ENCODE measurements at regions of chr22 and their contacts with region 1.

Region 1: DNA sequence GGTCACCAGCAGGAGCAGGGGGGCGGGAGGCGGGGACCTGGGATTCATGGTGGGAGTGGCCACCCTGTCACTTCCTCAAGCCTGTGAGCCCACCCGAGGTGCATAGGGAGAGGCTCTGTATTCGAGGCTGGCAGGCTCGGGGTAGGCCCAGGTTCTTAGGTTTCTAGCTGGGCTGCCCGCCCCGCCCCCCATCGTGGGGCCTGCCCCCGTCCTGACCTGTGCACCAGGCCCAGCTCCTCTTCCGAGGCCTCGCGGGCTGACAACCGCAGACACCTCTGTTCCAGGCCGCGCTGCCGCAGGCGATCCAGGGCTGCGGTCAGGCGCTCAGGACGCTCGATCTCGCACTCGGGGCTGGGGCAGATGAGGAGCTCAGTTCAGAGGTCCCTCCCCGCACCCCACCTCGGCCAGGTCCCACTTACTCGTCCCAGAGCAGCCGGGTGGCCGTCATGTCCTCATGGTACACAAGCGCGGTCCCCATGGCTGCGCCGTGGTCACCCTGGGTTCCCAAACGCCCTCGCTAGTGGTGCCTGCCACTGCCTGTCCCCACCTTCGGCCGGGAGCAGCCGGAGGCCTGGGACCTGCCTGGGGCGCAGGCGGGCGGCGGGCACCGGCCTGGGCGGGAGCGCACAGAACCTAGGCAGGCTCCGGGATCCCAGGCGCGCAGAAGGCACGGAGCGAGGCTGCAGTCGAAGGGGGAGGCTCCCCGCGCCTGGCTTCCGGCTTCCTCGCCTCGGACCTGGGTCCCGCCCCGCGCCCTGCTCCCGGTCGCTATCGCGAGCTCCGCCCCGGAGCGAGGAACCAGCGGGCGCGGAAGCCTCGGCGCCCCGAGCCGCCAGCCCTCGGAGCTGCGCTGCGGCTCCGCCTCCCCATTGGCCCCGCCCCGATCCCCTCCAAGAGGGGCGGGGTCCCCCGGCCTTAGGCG is at the start of gene HDAC10:
- DNase-seq: peak; percentile 85
- ATAC-seq: peak; percentile 84
- H3K4me3 ChIP-seq: peak within 1 kb of the TSS; percentile 56 to 81 (median 79)
- H3K4me3 Mint-ChIP-seq: peak within 1 kb of the TSS; percentile 86
- H3K27ac ChIP-seq: peak within 1 kb of the TSS; percentile 41 to 49
- H3K27ac Mint-ChIP-seq: peak within 1 kb of the TSS; percentile 76
- H3K4me1 ChIP-seq: peaks cover 15 to 44% of the 10 kb centered on the region in 2 donors
- H3K4me1 Mint-ChIP-seq: peaks cover 24% of the 10 kb centered on the region
- H3K27me3 ChIP-seq: no peaks in the 10 kb centered on the region
- H3K27me3 Mint-ChIP-seq: no peaks in the 10 kb centered on the region
- CTCF ChIP-seq: no peak
- total RNA-seq, gene HDAC10: 120 and 136 TPM in 2 replicates

Region 2: DNA sequence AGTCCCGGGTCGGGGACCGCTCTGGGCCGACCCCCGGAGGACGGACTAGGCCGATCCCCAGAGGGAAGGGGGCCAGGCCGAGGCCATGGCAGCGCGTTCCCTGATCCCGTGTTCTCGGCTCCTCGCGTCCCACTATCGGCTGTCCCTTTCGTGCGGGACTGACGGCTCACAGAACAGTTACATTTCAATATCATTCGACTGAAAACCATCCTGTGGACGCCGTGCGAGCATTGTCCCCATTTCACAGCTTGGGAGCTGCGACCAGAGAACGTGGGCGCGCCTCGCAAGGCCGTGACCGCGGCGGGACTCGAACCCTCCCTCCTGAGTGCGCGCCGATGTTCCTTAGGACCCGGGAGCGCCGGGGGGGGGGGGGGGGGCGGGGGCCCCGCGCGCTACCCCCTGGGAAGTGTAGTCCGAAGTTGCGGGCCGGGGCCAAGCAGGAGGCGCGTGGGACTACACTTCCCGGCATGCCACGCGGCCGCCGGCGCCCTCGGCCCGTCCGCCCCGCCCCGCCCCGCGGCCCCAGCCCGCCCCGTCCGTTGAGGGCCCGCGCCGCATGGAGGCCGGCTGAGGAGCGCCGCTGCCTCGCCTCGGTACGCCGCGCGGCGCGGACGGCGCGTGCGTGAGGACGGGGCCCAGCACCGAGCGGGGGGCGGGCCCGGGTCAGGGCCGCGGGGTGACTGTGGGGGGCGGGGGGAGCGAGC is 65.3 kb before region 1 on chr22 and contains the start of gene TRABD:
- CTCF ChIA-PET with region 1: no interaction called
- POLR2A ChIA-PET with region 1: no interaction called
- intact Hi-C with region 1: no loop called
- DNase-seq: peak; percentile 92
- ATAC-seq: peak; percentile 60
- H3K4me3 ChIP-seq: peak within 1 kb of the TSS; percentile 52 to 76 (median 61)
- H3K4me3 Mint-ChIP-seq: peak within 1 kb of the TSS; percentile 90
- H3K27ac ChIP-seq: peak within 1 kb of the TSS; percentile 38 to 71
- H3K27ac Mint-ChIP-seq: peak within 1 kb of the TSS; percentile 86
- H3K4me1 ChIP-seq: peaks cover 50 to 54% of the 10 kb centered on the region in 2 donors
- H3K4me1 Mint-ChIP-seq: peaks cover 36% of the 10 kb centered on the region
- H3K27me3 ChIP-seq: peaks cover 0 to 17% (median 2%) of the 10 kb centered on the region in 4 experiments
- H3K27me3 Mint-ChIP-seq: no peaks in the 10 kb centered on the region
- CTCF ChIP-seq: no peak
- total RNA-seq, gene TRABD: 200 and 205 TPM in 2 replicates

Region 3: DNA sequence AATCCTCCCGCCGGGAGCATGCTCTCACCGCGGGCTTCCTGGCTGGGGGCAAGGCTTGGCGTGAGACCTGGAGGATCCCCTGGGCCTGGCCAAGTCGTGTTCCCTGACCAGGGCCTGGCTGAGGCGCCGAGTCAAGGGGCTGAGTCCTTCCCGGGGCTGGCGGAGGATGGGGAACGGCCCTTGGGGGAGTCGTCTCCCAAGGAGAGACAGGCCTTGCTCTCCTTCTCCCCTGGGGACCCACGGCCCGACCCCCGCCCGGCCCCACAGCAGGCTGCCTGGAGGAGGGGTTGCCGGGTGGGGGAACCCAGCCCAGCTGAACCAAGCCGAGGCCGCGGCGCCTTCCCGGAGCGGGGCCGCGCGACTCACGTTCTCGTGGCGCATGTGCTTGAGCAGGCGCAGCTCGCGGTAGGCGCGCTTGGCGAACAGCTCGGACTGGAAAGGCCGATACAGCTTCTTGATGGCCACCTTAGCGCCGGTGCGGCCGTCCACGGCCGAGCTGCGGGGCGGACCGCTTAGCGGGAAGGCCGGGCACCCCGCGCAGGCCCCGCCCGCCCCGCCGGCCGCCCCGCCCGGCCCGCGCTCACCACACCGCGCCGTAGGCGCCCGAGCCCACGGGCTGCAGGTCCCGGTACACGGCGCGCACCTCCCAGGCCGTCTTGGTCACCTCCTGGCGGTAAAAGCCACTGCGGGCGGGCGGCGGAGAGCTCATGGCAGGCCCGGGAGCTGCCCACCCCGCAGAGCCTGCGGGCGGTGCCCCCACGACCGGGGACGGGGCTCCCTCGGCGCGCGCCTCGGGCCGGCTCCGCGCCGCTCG is 10.2 kb after region 1 on chr22:
- CTCF ChIA-PET with region 1: interaction called, 22 read pairs
- POLR2A ChIA-PET with region 1: no interaction called
- intact Hi-C with region 1: no loop called
- DNase-seq: no peak
- ATAC-seq: peak; percentile 28
- H3K4me3 ChIP-seq: peak overlapping the region in 3 of 5 experiments; percentile 5 to 36 (median 33)
- H3K4me3 Mint-ChIP-seq: peak overlapping the region; percentile 45
- H3K27ac ChIP-seq: no peak overlapping the region
- H3K27ac Mint-ChIP-seq: no peak overlapping the region
- H3K4me1 ChIP-seq: peaks cover 17 to 21% of the 10 kb centered on the region in 2 donors
- H3K4me1 Mint-ChIP-seq: peaks cover 13% of the 10 kb centered on the region
- H3K27me3 ChIP-seq: peaks cover 0 to 31% (median 8%) of the 10 kb centered on the region in 4 experiments
- H3K27me3 Mint-ChIP-seq: peaks cover 10% of the 10 kb centered on the region
- CTCF ChIP-seq: no peak

Region 4: GRCh38 chr22:50361688-50362087 is 110.9 kb after region 1 on chr22:
- CTCF ChIA-PET with region 1: interaction called, 11 read pairs
- POLR2A ChIA-PET with region 1: no interaction called
- intact Hi-C with region 1: no loop called
- DNase-seq: no peak
- ATAC-seq: no peak
- H3K4me3 ChIP-seq: no peak overlapping the region
- H3K4me3 Mint-ChIP-seq: no peak overlapping the region
- H3K27ac ChIP-seq: no peak overlapping the region
- H3K27ac Mint-ChIP-seq: no peak overlapping the region
- H3K4me1 ChIP-seq: peaks cover 0 to 2% of the 10 kb centered on the region in 2 donors
- H3K4me1 Mint-ChIP-seq: peaks cover 32% of the 10 kb centered on the region
- H3K27me3 ChIP-seq: no peaks in the 10 kb centered on the region
- H3K27me3 Mint-ChIP-seq: no peaks in the 10 kb centered on the region
- CTCF ChIP-seq: no peak

Region 5: GRCh38 chr22:50417411-50418210 is 166.8 kb after region 1 on chr22:
- CTCF ChIA-PET with region 1: no interaction called
- POLR2A ChIA-PET with region 1: no interaction called
- intact Hi-C with region 1: no loop called
- DNase-seq: no peak
- ATAC-seq: no peak
- H3K4me3 ChIP-seq: no peak overlapping the region
- H3K4me3 Mint-ChIP-seq: no peak overlapping the region
- H3K27ac ChIP-seq: no peak overlapping the region
- H3K27ac Mint-ChIP-seq: no peak overlapping the region
- H3K4me1 ChIP-seq: no peaks in the 10 kb centered on the region
- H3K4me1 Mint-ChIP-seq: no peaks in the 10 kb centered on the region
- H3K27me3 ChIP-seq: no peaks in the 10 kb centered on the region
- H3K27me3 Mint-ChIP-seq: no peaks in the 10 kb centered on the region
- CTCF ChIP-seq: no peak

Region 6: DNA sequence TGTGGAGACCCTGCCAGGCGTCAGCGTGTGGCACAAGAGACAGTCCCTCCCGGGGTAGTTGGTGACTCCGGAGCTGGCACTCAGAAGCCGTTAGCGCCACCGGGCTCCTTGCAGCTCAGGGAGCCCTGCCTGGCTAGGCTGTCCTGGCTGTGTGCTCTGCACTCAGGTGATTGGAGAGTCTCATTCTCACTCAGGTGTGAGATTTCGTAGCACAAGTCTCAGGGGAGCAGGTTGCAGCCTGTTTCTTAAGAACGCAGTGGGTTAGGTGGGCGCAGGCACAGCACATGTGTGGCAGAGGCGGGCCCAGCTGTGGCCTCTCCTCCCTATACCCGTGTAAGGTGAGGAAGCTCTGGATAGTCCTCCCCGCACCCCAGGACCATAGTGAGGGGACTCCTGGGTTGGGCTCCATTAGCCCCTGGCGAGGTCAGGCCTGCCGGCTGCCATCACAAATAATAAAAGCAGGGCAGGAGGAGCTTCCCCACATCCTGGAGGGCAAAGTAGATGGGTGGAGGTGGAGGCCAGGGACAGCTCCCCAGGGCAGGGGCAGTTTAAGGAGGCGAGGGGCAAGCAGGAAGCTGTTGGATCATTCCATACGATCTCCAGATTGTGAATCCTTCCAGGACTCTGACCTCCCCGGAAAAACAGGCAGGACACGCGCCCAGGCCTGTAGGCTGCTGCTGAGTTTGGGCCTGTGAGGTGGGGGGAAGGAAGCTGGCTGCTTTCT is 184.6 kb after region 1 on chr22:
- CTCF ChIA-PET with region 1: no interaction called
- POLR2A ChIA-PET with region 1: no interaction called
- intact Hi-C with region 1: no loop called
- DNase-seq: no peak
- ATAC-seq: no peak
- H3K4me3 ChIP-seq: no peak overlapping the region
- H3K4me3 Mint-ChIP-seq: no peak overlapping the region
- H3K27ac ChIP-seq: no peak overlapping the region
- H3K27ac Mint-ChIP-seq: no peak overlapping the region
- H3K4me1 ChIP-seq: no peaks in the 10 kb centered on the region
- H3K4me1 Mint-ChIP-seq: no peaks in the 10 kb centered on the region
- H3K27me3 ChIP-seq: no peaks in the 10 kb centered on the region
- H3K27me3 Mint-ChIP-seq: no peaks in the 10 kb centered on the region
- CTCF ChIP-seq: no peak

Region 7: DNA sequence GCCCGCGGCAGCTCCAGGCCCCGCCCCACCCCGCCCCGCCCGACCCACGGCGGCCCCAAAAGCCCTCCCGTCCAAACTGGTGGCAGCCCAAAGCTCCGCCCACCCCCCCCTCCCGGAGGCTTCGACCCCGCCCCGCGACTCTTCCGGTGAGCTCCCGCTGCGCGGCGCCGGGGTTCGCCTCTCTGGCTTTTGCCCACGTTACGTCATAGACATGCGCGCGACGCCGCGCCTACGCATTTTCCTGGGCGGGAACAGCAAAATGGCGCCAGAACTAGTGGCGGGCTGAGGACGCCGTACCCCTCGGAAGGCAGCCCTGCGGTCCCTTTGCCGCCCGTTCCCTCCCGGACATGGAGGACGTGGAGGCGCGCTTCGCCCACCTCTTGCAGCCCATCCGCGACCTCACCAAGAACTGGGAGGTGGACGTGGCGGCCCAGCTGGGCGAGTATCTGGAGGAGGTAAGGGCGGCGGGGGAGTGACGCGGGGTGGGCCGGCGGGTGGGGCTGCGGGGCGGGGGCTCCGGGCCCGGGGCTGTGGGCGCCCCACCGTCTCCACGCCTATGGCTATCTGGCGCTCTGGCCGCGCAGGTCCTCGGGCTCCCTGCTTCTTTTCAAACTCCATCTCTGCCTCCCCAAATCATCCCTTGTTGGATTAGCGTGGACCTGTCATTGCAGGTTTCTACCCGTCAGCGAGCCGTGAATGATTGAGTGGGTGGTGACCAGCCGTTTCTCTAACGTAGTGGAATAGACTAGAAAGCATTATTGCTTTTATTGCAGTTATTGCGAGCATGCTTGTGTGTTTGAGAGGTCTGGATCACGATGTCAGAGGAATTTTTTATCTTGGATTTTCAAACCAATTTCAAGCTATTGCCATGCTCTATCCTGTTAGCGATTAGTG is 257.4 kb after region 1 on chr22 and contains the start of gene NCAPH2:
- CTCF ChIA-PET with region 1: no interaction called
- POLR2A ChIA-PET with region 1: no interaction called
- intact Hi-C with region 1: no loop called
- DNase-seq: peak; percentile 98
- ATAC-seq: peak; percentile 71
- H3K4me3 ChIP-seq: peak within 1 kb of the TSS; percentile 75 to 92 (median 91)
- H3K4me3 Mint-ChIP-seq: peak within 1 kb of the TSS; percentile 95
- H3K27ac ChIP-seq: peak within 1 kb of the TSS; percentile 88 to 92
- H3K27ac Mint-ChIP-seq: peak within 1 kb of the TSS; percentile 98
- H3K4me1 ChIP-seq: peaks cover 19 to 29% of the 10 kb centered on the region in 2 donors
- H3K4me1 Mint-ChIP-seq: peaks cover 28% of the 10 kb centered on the region
- H3K27me3 ChIP-seq: no peaks in the 10 kb centered on the region
- H3K27me3 Mint-ChIP-seq: no peaks in the 10 kb centered on the region
- CTCF ChIP-seq: no peak
- total RNA-seq, gene NCAPH2: 71.5 and 76.9 TPM in 2 replicates